ENCODE measurements at regions of chr12 and their contacts with region 1.

Region 1: GRCh38 chr12:91663310-91663709 is 480.7 kb upstream of the DCN start:
- DNase-seq: no peak
- ATAC-seq: no peak
- H3K4me3 ChIP-seq: no peak overlapping the region
- H3K4me3 Mint-ChIP-seq: no peak overlapping the region
- H3K27ac ChIP-seq: no peak overlapping the region
- H3K27ac Mint-ChIP-seq: no peak overlapping the region
- H3K4me1 ChIP-seq: no peaks in the 10 kb centered on the region
- H3K4me1 Mint-ChIP-seq: peaks cover 0 to 32% (median 28%) of the 10 kb centered on the region in 7 donors
- H3K27me3 ChIP-seq: no peaks in the 10 kb centered on the region
- H3K27me3 Mint-ChIP-seq: no peaks in the 10 kb centered on the region

Region 2: DNA sequence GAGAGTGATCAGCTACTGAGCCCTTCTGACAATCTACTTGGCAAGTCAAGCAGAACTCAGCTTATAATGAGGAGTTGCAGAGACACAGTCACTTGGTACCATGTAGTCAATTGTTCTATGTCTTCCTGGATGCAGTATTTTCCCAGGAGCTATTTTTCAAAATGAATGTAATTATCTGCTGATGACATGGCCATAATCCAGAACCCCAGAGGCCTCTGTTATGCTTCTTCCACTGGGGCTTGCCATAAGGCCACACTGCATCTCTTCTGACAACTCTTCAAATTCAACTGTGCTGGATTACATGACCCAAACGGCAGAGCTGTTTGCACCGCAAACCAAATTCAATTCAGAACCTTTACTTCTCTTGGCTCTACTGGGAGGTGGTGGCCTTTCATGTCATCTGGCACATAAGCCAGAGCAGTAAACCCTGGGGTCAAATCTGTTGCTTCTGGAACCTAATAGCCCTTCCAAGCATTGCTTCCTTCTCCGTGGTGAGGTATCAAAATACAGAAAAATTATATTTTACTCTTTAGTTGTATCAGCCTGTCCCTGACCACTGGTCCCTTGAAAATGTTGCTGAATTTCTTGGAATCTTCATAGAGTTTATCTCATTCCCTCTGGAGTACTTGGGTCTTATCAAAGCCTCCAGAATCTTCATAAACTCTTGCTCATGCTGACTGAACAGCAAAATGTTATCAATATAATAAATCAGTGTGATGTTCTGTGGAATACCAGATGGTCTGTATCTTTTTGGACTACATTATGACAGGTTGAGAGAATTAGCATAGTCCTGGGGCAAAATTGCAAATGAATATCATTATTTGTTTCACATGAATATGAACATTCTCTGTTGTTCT is 401.3 kb before region 1 on chr12:
- CTCF ChIA-PET with region 1: no interaction called
- POLR2A ChIA-PET with region 1: no interaction called
- intact Hi-C with region 1: no loop called
- DNase-seq: no peak
- ATAC-seq: no peak
- H3K4me3 ChIP-seq: no peak overlapping the region
- H3K4me3 Mint-ChIP-seq: no peak overlapping the region
- H3K27ac ChIP-seq: no peak overlapping the region
- H3K27ac Mint-ChIP-seq: no peak overlapping the region
- H3K4me1 ChIP-seq: no peaks in the 10 kb centered on the region
- H3K4me1 Mint-ChIP-seq: no peaks in the 10 kb centered on the region
- H3K27me3 ChIP-seq: no peaks in the 10 kb centered on the region
- H3K27me3 Mint-ChIP-seq: peaks cover 0 to 28% (median 5%) of the 10 kb centered on the region in 5 donors

Region 3: GRCh38 chr12:91274916-91275315 is 388.4 kb before region 1 on chr12:
- CTCF ChIA-PET with region 1: no interaction called
- POLR2A ChIA-PET with region 1: no interaction called
- intact Hi-C with region 1: no loop called
- DNase-seq: no peak
- ATAC-seq: no peak
- H3K4me3 ChIP-seq: no peak overlapping the region
- H3K4me3 Mint-ChIP-seq: no peak overlapping the region
- H3K27ac ChIP-seq: no peak overlapping the region
- H3K27ac Mint-ChIP-seq: no peak overlapping the region
- H3K4me1 ChIP-seq: no peaks in the 10 kb centered on the region
- H3K4me1 Mint-ChIP-seq: no peaks in the 10 kb centered on the region
- H3K27me3 ChIP-seq: peaks cover 0 to 3% of the 10 kb centered on the region in 2 donors
- H3K27me3 Mint-ChIP-seq: peaks cover 0 to 44% (median 29%) of the 10 kb centered on the region in 5 donors

Region 4: DNA sequence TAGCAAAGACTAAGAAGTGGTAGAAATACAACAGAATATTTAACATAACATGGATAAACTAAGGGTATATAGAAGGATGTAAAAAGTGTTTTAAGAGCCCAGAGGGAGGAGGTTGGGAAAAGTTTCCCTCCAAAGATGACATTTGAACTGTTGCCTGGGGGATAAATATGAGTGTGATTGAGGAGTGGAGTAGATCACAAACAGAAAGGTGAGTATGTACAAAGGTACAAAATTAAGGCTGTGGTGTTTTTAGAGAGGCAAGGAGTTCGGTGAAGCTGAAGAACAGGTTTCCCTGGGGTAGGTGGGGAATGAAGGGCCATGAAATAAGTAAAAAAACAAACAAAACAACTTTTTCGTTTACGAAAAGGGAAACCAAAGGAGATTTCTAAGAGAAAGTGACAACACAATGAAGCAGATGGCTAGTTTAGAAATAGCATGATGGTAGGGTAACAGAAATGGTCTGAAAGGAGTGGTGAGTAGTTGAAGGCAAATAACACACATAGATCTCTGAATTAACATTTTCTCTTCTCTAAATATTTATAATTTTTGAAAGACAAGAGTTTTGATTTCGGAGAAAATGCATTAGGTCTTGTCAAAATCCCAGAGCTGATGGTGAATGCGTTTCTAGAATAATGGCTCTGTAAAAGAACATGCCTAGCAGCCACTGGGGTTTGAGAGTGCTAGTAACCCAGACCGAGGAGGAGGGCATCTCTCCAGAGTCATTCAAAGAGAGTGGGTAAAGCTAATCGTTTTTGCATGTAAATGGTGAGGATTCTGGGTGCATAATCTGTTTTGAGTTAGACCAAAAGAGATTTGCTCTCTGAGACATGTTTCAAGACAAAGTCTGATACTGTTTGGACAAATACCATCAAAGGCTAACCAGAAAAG is 240.3 kb before region 1 on chr12:
- CTCF ChIA-PET with region 1: no interaction called
- POLR2A ChIA-PET with region 1: no interaction called
- intact Hi-C with region 1: loop called in 1 of 2 experiments (anchors 1 kb)
- DNase-seq: no peak
- ATAC-seq: no peak
- H3K4me3 ChIP-seq: no peak overlapping the region
- H3K4me3 Mint-ChIP-seq: no peak overlapping the region
- H3K27ac ChIP-seq: no peak overlapping the region
- H3K27ac Mint-ChIP-seq: no peak overlapping the region
- H3K4me1 ChIP-seq: no peaks in the 10 kb centered on the region
- H3K4me1 Mint-ChIP-seq: no peaks in the 10 kb centered on the region
- H3K27me3 ChIP-seq: no peaks in the 10 kb centered on the region
- H3K27me3 Mint-ChIP-seq: peaks cover 0 to 10% (median 2%) of the 10 kb centered on the region in 5 donors

Region 5: DNA sequence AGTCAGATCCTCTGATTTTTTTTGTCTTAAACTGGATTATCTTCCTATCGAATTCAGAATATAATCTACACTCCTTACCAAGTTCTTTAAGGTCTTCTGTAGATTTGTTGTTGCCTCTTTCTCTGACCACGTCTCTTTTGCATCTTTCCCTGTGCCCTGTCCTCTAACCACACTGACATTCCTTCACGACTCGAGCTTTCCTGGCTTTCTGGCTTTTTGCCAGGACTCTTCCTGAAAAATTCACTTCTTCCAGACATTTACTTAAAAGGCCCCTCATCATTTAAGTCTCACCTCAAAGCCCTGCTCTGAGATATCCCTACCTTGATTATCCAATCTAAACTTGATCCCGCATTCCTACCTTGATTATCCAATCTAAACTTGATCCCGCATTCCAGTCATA is 58.4 kb before region 1 on chr12:
- CTCF ChIA-PET with region 1: no interaction called
- POLR2A ChIA-PET with region 1: no interaction called
- intact Hi-C with region 1: no loop called
- DNase-seq: no peak
- ATAC-seq: no peak
- H3K4me3 ChIP-seq: no peak overlapping the region
- H3K4me3 Mint-ChIP-seq: no peak overlapping the region
- H3K27ac ChIP-seq: no peak overlapping the region
- H3K27ac Mint-ChIP-seq: no peak overlapping the region
- H3K4me1 ChIP-seq: no peaks in the 10 kb centered on the region
- H3K4me1 Mint-ChIP-seq: peaks cover 0 to 18% (median 11%) of the 10 kb centered on the region in 7 donors
- H3K27me3 ChIP-seq: no peaks in the 10 kb centered on the region
- H3K27me3 Mint-ChIP-seq: peaks cover 0 to 4% (median 0%) of the 10 kb centered on the region in 5 donors

Region 6: DNA sequence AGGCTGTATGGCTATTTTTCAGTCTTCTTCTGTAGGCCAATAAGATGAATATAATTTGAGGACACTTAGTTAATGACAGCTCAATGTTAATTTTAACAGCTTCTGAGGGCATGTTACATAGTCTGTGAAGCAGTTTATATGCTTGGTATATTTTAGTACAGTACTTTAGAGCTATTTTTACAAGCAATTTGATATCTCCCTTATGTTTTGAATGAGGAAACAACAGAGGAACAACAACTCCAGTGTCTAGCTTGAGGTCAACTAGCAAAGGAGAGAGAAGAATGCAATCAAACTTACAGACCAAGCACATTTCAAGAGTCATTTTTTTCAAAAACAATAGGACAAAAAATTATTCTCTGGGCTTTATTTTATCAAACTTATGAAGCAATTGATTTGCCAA is 11.6 kb before region 1 on chr12:
- CTCF ChIA-PET with region 1: no interaction called
- POLR2A ChIA-PET with region 1: no interaction called
- intact Hi-C with region 1: loop called in 1 of 2 experiments (anchors 2 kb)
- DNase-seq: no peak
- ATAC-seq: no peak
- H3K4me3 ChIP-seq: no peak overlapping the region
- H3K4me3 Mint-ChIP-seq: no peak overlapping the region
- H3K27ac ChIP-seq: no peak overlapping the region
- H3K27ac Mint-ChIP-seq: no peak overlapping the region
- H3K4me1 ChIP-seq: no peaks in the 10 kb centered on the region
- H3K4me1 Mint-ChIP-seq: peaks cover 0 to 6% (median under 1%) of the 10 kb centered on the region in 7 donors
- H3K27me3 ChIP-seq: no peaks in the 10 kb centered on the region
- H3K27me3 Mint-ChIP-seq: peaks cover 0 to 8% (median 0%) of the 10 kb centered on the region in 5 donors

Measured in naive thymus-derived CD4-positive, alpha-beta T cell (primary cell).